ENCODE measurements at regions of chr14 and their contacts with region 1.

Region 1: DNA sequence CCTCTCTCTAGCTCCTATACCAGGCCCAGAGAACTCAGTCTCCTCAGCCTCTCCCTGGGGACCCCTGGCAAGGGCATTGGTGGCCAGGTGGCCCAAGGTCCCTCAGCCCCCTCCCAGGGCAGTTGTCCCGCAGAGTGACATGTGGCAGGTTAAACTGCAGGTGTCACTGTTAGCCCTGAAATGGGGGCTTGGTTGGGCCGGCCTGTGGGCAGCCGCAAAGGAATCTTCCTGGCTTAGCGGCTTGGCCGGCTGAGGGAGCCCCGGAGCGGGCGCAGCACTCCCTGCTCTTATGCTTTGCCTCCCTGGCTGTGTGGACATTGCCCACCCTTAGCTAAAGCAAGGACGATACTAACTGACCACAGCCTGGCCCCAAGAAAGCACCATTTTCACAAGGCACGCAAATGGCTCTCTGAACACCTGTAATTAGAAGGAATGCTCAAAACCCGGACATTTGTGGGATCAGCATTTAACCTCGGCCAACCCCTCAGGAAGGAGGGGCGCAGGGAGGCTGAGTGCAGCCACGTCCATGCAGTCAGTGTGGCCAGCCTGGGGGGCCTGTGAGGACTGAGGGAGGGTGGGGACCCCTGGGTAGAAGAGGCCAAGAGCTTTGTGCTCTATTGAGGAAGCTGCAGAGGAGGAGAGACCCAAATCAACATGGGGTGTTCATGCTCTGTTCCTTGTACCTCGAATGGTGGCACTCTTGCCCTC is 82.2 kb downstream of the PAPOLA start:
- DNase-seq: peak; percentile 72 to 75 (median 73)
- H3K4me3 ChIP-seq: peak overlapping the region in 2 of 7 experiments; percentile 30 to 50
- H3K27ac ChIP-seq: no peak overlapping the region
- H3K4me1 ChIP-seq: peaks cover 0 to 3% (median 1%) of the 10 kb centered on the region in 4 experiments
- H3K27me3 ChIP-seq: peaks cover 2 to 53% (median 17%) of the 10 kb centered on the region in 5 experiments

Region 2: DNA sequence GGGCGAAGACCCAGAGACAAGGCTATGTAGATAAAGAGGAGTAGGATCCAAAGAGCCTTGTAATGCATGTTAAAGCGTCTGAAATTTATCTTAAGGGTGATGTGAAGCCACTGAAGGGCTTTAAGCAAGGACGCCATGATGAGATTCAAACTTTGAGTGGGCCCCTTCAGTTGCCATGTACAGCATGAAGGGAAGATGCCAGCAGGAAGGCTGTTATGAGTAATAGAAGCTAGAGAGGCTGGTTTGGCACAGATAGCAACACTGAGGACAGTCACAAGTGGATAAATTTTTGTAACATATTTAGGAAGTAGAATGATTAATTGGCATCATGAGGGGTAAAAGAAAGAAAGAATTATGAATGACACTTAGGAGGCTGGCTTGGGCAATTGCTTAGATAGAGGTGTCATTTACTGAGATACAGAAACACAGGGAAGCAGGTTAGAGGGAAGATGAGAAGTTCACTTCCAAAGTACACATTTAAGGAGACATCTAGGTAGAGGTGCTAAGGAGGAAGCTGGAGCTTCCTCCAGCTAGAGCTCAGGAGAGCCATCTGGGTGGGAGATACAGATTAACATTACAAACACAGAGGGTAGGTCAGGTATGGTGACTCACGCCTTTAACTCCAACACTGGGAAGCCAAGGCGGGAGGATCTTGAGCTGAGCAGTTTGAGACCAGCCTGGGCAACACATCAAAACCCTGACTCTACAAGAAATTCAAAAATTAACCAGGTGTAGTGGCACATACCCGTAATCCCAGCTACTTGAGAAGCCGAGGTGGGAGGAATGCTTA is 234.9 kb before region 1 on chr14:
- CTCF ChIA-PET with region 1: no interaction called
- POLR2A ChIA-PET with region 1: no interaction called
- DNase-seq: peak; percentile 47 to 71 (median 55)
- H3K4me3 ChIP-seq: peak overlapping the region in 1 of 7 experiments; percentile 24
- H3K27ac ChIP-seq: peak overlapping the region in 1 of 2 experiments; percentile 2
- H3K4me1 ChIP-seq: peaks cover 0 to 12% (median 5%) of the 10 kb centered on the region in 4 experiments
- H3K27me3 ChIP-seq: no peaks in the 10 kb centered on the region

Region 3: DNA sequence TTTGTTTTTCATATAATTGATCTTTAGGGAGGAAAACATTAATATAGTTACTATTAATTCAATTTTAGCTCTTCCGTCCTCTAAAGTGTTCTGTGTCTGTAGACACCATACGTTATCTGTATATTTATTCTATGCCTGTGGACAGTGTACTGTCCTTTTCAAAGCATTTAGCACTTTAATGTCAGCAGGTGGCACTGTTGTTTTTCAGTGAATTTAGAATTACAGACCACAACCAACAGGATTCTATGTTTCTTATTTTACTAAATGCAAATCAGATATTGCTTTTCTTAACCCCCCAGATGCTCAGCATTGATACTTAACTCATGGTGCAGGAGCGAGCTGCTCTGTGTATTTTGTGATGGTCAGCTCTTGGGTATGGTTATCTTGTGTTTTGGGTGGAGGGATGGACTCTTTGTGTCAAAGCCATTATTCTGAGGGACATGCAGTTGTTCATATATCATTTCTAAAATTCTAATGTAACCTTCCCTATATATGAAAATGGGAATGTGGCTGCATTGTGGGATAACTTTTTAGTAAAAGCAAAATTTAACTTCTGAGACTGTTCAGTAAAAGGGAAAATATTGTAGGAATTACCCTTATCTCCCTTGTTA is 17.0 kb before region 1 on chr14:
- CTCF ChIA-PET with region 1: interaction called, 17 read pairs
- POLR2A ChIA-PET with region 1: no interaction called
- DNase-seq: peak; percentile 49 to 73 (median 66)
- H3K4me3 ChIP-seq: no peak overlapping the region
- H3K27ac ChIP-seq: no peak overlapping the region
- H3K4me1 ChIP-seq: no peaks in the 10 kb centered on the region
- H3K27me3 ChIP-seq: no peaks in the 10 kb centered on the region

Region 4: GRCh38 chr14:96614481-96614881 is 30.1 kb after region 1 on chr14:
- CTCF ChIA-PET with region 1: no interaction called
- POLR2A ChIA-PET with region 1: no interaction called
- DNase-seq: no peak
- H3K4me3 ChIP-seq: no peak overlapping the region
- H3K27ac ChIP-seq: no peak overlapping the region
- H3K4me1 ChIP-seq: no peaks in the 10 kb centered on the region
- H3K27me3 ChIP-seq: peaks cover 0 to 30% (median 3%) of the 10 kb centered on the region in 5 experiments

Region 5: GRCh38 chr14:96741151-96741977 is 157.0 kb after region 1 on chr14:
- CTCF ChIA-PET with region 1: interaction called, 34 read pairs
- POLR2A ChIA-PET with region 1: no interaction called
- DNase-seq: peak; percentile 39 to 76 (median 76)
- H3K4me3 ChIP-seq: peak overlapping the region in 6 of 7 experiments; percentile 4 to 74 (median 49)
- H3K27ac ChIP-seq: no peak overlapping the region
- H3K4me1 ChIP-seq: peaks cover 0 to 14% (median 9%) of the 10 kb centered on the region in 4 experiments
- H3K27me3 ChIP-seq: peaks cover 16 to 67% (median 26%) of the 10 kb centered on the region in 5 experiments

Region 6: GRCh38 chr14:96852823-96853422 is 268.6 kb after region 1 on chr14:
- CTCF ChIA-PET with region 1: interaction called, 10 read pairs
- POLR2A ChIA-PET with region 1: no interaction called
- DNase-seq: peak; percentile 36 to 67 (median 64)
- H3K4me3 ChIP-seq: no peak overlapping the region
- H3K27ac ChIP-seq: no peak overlapping the region
- H3K4me1 ChIP-seq: no peaks in the 10 kb centered on the region
- H3K27me3 ChIP-seq: no peaks in the 10 kb centered on the region